ENCODE measurements at regions of chr11 and their contacts with region 1.

Region 1: GRCh38 chr11:62841361-62842184 is 2.2 kb upstream of the WDR74 start:
- DNase-seq: peak; percentile 92
- ATAC-seq: peak; percentile 74
- H3K4me3 Mint-ChIP-seq: no peak overlapping the region
- H3K27ac Mint-ChIP-seq: no peak overlapping the region
- H3K4me1 Mint-ChIP-seq: peaks cover 20% of the 10 kb centered on the region
- H3K27me3 Mint-ChIP-seq: no peaks in the 10 kb centered on the region

Region 2: DNA sequence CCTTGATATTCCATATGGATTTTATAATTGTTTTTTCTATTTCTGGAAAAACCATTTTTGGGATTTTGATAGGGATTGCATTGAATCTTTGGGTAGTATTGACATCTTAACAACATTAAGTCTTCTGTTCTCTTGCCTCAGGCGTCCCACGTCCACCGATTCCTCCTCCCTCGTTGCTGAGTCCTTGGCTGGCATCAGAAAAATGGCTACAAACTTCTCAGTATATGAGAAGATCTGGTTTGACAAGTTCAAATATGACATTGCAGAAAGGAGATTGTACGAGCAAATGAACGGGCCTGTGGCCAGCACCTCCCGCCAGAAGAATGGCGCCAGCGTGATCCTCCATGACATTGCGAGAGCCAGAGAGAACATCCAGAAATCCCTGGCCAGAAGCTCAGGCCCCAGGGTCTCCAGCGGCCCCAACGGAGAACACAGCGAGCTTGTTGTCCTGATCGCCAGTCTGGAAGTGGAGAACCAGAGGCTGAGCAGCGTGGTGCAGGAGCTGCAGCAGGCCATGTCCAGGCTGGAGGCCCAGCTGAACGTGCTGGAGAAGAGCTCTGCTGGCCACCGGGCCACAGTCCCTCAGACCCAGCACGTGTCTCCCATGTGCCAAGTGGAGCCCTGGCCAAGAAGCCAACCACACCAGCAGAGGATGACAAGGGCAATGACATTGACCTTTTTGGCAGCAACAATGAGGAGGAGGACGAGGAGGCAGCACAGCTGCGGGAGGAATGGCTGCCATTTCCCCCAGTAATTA is 672.3 kb before region 1 on chr11:
- CTCF ChIA-PET with region 1: no interaction called
- POLR2A ChIA-PET with region 1: no interaction called
- DNase-seq: no peak
- ATAC-seq: no peak
- H3K4me3 Mint-ChIP-seq: no peak overlapping the region
- H3K27ac Mint-ChIP-seq: no peak overlapping the region
- H3K4me1 Mint-ChIP-seq: peaks cover 2% of the 10 kb centered on the region
- H3K27me3 Mint-ChIP-seq: peaks cover 28% of the 10 kb centered on the region

Region 3: GRCh38 chr11:62556108-62556871 is 285.3 kb before region 1 on chr11:
- CTCF ChIA-PET with region 1: no interaction called
- POLR2A ChIA-PET with region 1: interaction called, 13 read pairs
- DNase-seq: peak; percentile 94
- ATAC-seq: peak; percentile 72
- H3K4me3 Mint-ChIP-seq: peak overlapping the region; percentile 66
- H3K27ac Mint-ChIP-seq: peak overlapping the region; percentile 95
- H3K4me1 Mint-ChIP-seq: peaks cover 95% of the 10 kb centered on the region
- H3K27me3 Mint-ChIP-seq: no peaks in the 10 kb centered on the region

Region 4: GRCh38 chr11:62621567-62622470 is 219.8 kb before region 1 on chr11 and contains the start of gene B3GAT3:
- CTCF ChIA-PET with region 1: no interaction called
- POLR2A ChIA-PET with region 1: interaction called, 15 read pairs
- DNase-seq: peak; percentile 98
- ATAC-seq: peak; percentile 90
- H3K4me3 Mint-ChIP-seq: peak within 1 kb of the TSS; percentile 86
- H3K27ac Mint-ChIP-seq: peak within 1 kb of the TSS; percentile 97
- H3K4me1 Mint-ChIP-seq: peaks cover 29% of the 10 kb centered on the region
- H3K27me3 Mint-ChIP-seq: no peaks in the 10 kb centered on the region
- total RNA-seq, gene B3GAT3: 63.0 to 64.8 TPM

Region 5: DNA sequence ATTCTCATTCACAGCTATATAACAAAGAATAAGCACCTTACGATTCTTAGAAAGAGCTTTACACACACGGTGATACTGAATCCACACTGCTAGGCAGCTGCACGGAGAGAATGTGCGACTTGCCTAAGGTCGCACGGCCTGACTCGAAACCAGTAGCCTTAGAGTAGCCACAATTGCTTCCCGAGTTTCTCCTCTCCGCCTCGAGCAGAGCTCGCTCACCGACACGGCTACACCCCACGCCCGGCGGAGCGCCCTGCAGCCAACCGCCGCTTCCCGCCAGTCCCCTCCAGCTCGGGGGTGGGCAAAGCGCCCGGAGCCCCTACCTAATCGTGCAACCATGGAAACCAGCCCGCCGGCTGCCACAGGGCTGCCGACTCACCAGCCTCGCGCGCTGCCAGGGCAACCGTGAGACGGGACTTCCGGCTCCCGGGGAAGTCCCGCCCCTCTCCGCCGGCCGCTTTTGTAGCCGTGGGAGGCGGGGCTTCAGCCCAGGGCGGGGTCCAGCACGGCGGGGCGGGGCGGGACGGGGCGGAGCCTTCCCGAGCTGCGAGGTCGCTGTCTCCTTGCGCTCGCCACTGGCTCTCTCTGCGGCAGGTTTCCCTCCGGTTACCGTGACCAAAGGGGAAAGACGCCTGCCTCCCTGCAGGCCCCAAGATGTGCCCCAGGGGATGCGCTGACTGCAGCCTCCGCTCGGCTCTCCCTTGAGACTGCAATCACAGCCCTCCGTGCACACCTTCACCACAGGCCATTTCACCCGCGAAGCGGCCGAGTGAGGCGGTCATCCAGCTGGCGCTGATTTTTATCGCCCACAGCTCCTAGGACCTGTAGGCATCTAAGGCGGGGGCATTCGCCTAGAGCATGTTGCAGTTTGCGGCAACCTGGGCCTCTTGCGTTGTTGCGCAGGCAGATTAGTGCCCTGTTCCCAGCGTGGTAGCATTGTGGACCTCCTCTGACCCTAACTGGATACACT is 135.4 kb before region 1 on chr11:
- CTCF ChIA-PET with region 1: no interaction called
- POLR2A ChIA-PET with region 1: interaction called, 73 read pairs
- DNase-seq: peak; percentile 95
- ATAC-seq: peak; percentile 67
- H3K4me3 Mint-ChIP-seq: peak overlapping the region; percentile 90
- H3K27ac Mint-ChIP-seq: peak overlapping the region; percentile 83
- H3K4me1 Mint-ChIP-seq: peaks cover 49% of the 10 kb centered on the region
- H3K27me3 Mint-ChIP-seq: no peaks in the 10 kb centered on the region

Region 6: GRCh38 chr11:62787005-62787759 is 54.4 kb before region 1 on chr11 and contains the start of gene TMEM179B:
- CTCF ChIA-PET with region 1: interaction called, 30 read pairs
- POLR2A ChIA-PET with region 1: interaction called, 190 read pairs
- DNase-seq: peak; percentile 100
- ATAC-seq: peak; percentile 70
- H3K4me3 Mint-ChIP-seq: peak within 1 kb of the TSS; percentile 96
- H3K27ac Mint-ChIP-seq: peak within 1 kb of the TSS; percentile 98
- H3K4me1 Mint-ChIP-seq: peaks cover 46% of the 10 kb centered on the region
- H3K27me3 Mint-ChIP-seq: no peaks in the 10 kb centered on the region
- total RNA-seq, gene TMEM179B: 37.3 to 40.8 TPM

Region 7: DNA sequence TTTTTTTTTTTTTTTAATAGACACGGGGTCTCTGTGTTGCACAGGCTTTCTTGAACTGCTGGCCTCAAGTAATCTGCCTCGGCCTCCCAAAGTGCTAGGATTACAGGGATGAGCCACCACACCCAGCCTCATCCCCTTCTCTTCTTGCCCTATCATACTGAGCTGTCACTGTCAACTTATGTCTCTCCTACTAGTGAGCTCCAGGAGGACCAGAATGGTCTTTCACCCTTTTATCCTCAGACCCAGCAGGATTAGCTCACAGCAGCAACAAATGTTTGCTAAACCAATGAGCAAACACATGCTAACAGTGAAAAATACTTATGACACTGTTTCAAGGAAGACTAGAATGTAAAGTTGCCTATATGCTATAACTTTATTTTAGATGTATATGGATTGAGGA is 29.9 kb before region 1 on chr11:
- CTCF ChIA-PET with region 1: no interaction called
- POLR2A ChIA-PET with region 1: interaction called, 40 read pairs
- DNase-seq: no peak
- ATAC-seq: no peak
- H3K4me3 Mint-ChIP-seq: no peak overlapping the region
- H3K27ac Mint-ChIP-seq: no peak overlapping the region
- H3K4me1 Mint-ChIP-seq: peaks cover 5% of the 10 kb centered on the region
- H3K27me3 Mint-ChIP-seq: no peaks in the 10 kb centered on the region

Region 8: GRCh38 chr11:62875698-62876478 is 34.3 kb after region 1 on chr11:
- CTCF ChIA-PET with region 1: interaction called, 5 read pairs
- POLR2A ChIA-PET with region 1: interaction called, 114 read pairs
- DNase-seq: no peak
- ATAC-seq: no peak
- H3K4me3 Mint-ChIP-seq: no peak overlapping the region
- H3K27ac Mint-ChIP-seq: no peak overlapping the region
- H3K4me1 Mint-ChIP-seq: peaks cover 17% of the 10 kb centered on the region
- H3K27me3 Mint-ChIP-seq: no peaks in the 10 kb centered on the region

Region 9: DNA sequence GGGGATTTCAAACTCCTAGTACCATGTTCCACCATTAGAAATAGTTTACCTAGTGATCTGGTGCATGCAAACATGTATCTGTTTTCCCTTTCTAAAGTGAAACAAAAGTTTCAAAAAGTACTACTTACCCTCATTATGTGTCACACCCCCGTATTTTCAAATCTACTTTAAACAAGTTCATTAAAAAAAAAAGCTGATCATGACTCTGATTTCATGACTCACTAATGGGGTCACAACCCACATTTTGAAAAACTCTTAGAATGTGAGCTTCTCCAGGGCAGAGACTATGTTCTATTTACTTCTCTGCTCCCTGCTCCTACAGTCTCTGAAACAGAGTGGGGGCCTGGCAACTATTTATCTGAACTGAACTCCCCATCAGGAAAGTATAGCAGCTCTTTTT is 61.4 kb after region 1 on chr11:
- CTCF ChIA-PET with region 1: no interaction called
- POLR2A ChIA-PET with region 1: no interaction called
- DNase-seq: no peak
- ATAC-seq: no peak
- H3K4me3 Mint-ChIP-seq: no peak overlapping the region
- H3K27ac Mint-ChIP-seq: no peak overlapping the region
- H3K4me1 Mint-ChIP-seq: peaks cover 18% of the 10 kb centered on the region
- H3K27me3 Mint-ChIP-seq: peaks cover 37% of the 10 kb centered on the region

Region 10: GRCh38 chr11:62921787-62922589 is 80.4 kb after region 1 on chr11:
- CTCF ChIA-PET with region 1: no interaction called
- POLR2A ChIA-PET with region 1: no interaction called
- DNase-seq: no peak
- ATAC-seq: no peak
- H3K4me3 Mint-ChIP-seq: no peak overlapping the region
- H3K27ac Mint-ChIP-seq: no peak overlapping the region
- H3K4me1 Mint-ChIP-seq: peaks cover 24% of the 10 kb centered on the region
- H3K27me3 Mint-ChIP-seq: peaks cover 52% of the 10 kb centered on the region

Measured in activated CD8-positive, alpha-beta T cell treated with anti-CD3 and anti-CD28 coated beads, Interleukin-2, amount 10 ng/mL, durations not matched to agents 7 days and 5 days (primary cell).